IMR-90 (cell line): ENCODE measurements at regions of chr19 and their contacts with region 1.

Region 1: GRCh38 chr19:45423589-45424190 is at the start of gene ERCC1:
- DNase-seq: peak; percentile 94
- ATAC-seq: peak; percentile 83
- H3K4me3 ChIP-seq: peak within 1 kb of the TSS; percentile 70
- H3K27ac ChIP-seq: peak within 1 kb of the TSS; percentile 98
- H3K4me1 ChIP-seq: peaks cover 5% of the 10 kb centered on the region
- H3K27me3 ChIP-seq: no peaks in the 10 kb centered on the region
- CTCF ChIP-seq: no peak
- POLR2A ChIP-seq: peak; percentile 88
- RAD21 ChIP-seq: no peak
- total RNA-seq, gene ERCC1: 76.9 and 84.2 TPM in 2 replicates

Region 2: DNA sequence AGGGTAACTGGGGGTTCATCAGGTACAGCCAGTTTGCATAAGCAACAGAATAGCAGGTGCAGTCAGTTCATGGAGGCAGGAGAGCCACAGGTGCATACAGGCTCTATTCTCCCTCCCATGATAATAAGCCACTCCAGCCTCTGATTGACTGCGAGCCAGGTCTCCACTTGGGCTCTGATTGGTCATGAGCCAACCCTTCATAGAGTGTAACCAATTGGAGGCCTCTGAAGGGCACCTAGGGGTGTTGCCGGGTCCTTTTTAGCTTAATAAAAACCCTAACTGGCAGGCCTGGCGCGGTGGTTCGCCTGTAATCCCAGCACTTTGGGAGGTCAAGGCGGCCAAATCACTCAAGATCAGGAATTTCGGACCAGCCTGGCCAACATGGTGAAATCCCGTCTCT is 92.3 kb before region 1 on chr19:
- CTCF ChIA-PET with region 1: no interaction called
- POLR2A ChIA-PET with region 1: no interaction called
- dilution Hi-C with region 1: no loop called
- in situ Hi-C with region 1: no loop called
- intact Hi-C with region 1: no loop called
- DNase-seq: no peak
- ATAC-seq: no peak
- H3K4me3 ChIP-seq: no peak overlapping the region
- H3K27ac ChIP-seq: no peak overlapping the region
- H3K4me1 ChIP-seq: no peaks in the 10 kb centered on the region
- H3K27me3 ChIP-seq: no peaks in the 10 kb centered on the region
- CTCF ChIP-seq: no peak
- POLR2A ChIP-seq: no peak
- RAD21 ChIP-seq: no peak

Region 3: GRCh38 chr19:45370410-45371204 is 53.1 kb before region 1 on chr19 and contains the start of gene ERCC2:
- CTCF ChIA-PET with region 1: no interaction called
- POLR2A ChIA-PET with region 1: no interaction called
- dilution Hi-C with region 1: no loop called
- in situ Hi-C with region 1: no loop called
- intact Hi-C with region 1: no loop called
- DNase-seq: peak; percentile 99
- ATAC-seq: peak; percentile 98
- H3K4me3 ChIP-seq: peak within 1 kb of the TSS; percentile 84
- H3K27ac ChIP-seq: peak within 1 kb of the TSS; percentile 59
- H3K4me1 ChIP-seq: peaks cover 4% of the 10 kb centered on the region
- H3K27me3 ChIP-seq: no peaks in the 10 kb centered on the region
- CTCF ChIP-seq: no peak
- POLR2A ChIP-seq: no peak
- RAD21 ChIP-seq: no peak
- total RNA-seq, gene ERCC2: 26.7 and 30.6 TPM in 2 replicates

Region 4: GRCh38 chr19:45385392-45386221 is 38.1 kb before region 1 on chr19:
- CTCF ChIA-PET with region 1: no interaction called
- POLR2A ChIA-PET with region 1: no interaction called
- dilution Hi-C with region 1: no loop called
- in situ Hi-C with region 1: no loop called
- intact Hi-C with region 1: no loop called
- DNase-seq: no peak
- ATAC-seq: peak; percentile 35; the same call in 1 of the 2 replicates
- H3K4me3 ChIP-seq: no peak overlapping the region
- H3K27ac ChIP-seq: no peak overlapping the region
- H3K4me1 ChIP-seq: peaks cover 5% of the 10 kb centered on the region
- H3K27me3 ChIP-seq: no peaks in the 10 kb centered on the region
- CTCF ChIP-seq: no peak
- POLR2A ChIP-seq: no peak
- RAD21 ChIP-seq: no peak

Region 5: GRCh38 chr19:45405435-45406225 is 18.1 kb before region 1 on chr19:
- CTCF ChIA-PET with region 1: no interaction called
- POLR2A ChIA-PET with region 1: interaction called, 11 read pairs
- dilution Hi-C with region 1: no loop called
- in situ Hi-C with region 1: no loop called
- intact Hi-C with region 1: no loop called
- DNase-seq: peak; percentile 80
- ATAC-seq: peak; percentile 76
- H3K4me3 ChIP-seq: peak overlapping the region; percentile 89
- H3K27ac ChIP-seq: peak overlapping the region; percentile 89
- H3K4me1 ChIP-seq: peaks cover 5% of the 10 kb centered on the region
- H3K27me3 ChIP-seq: no peaks in the 10 kb centered on the region
- CTCF ChIP-seq: no peak
- POLR2A ChIP-seq: peak; percentile 25; the same call in 1 of the 2 replicates
- RAD21 ChIP-seq: no peak

Region 6: GRCh38 chr19:45478454-45479238 is 55.0 kb after region 1 on chr19:
- CTCF ChIA-PET with region 1: interaction called, 14 read pairs
- POLR2A ChIA-PET with region 1: interaction called, 3 read pairs
- dilution Hi-C with region 1: no loop called
- in situ Hi-C with region 1: no loop called
- intact Hi-C with region 1: loop called (anchors 1 kb)
- DNase-seq: peak; percentile 96
- ATAC-seq: peak; percentile 96
- H3K4me3 ChIP-seq: peak overlapping the region; percentile 49
- H3K27ac ChIP-seq: peak overlapping the region; percentile 68
- H3K4me1 ChIP-seq: peaks cover 4% of the 10 kb centered on the region
- H3K27me3 ChIP-seq: no peaks in the 10 kb centered on the region
- CTCF ChIP-seq: no peak
- POLR2A ChIP-seq: no peak
- RAD21 ChIP-seq: no peak